Psoas muscle (tissue), 8 donors: ENCODE measurements at regions of chr6 and their contacts with region 1.

Region 1: DNA sequence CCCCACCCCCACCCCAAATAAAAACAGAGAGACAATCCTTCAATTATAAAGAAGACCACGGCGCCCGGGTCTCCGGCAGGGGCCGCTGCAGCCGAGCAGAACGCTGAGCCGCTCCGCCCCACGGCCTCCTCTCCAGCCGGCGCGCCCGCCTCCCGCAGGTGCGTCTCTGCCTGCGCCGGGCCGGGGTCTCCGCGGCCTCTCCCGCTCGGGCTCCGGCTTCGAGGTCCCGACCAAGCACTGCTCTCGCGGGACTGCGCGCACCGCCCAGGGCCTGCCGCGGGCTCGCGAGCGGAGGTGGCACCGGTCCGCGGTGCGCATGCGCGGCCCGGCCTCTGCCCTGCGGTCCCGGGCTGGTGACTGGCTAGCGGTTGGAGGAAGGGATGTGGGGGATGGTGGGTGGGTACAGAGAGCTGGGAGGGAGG is 241 bp upstream of the SIRT5 start:
- DNase-seq: peak; percentile 90 to 95
- ATAC-seq: peak; percentile 94
- H3K4me3 ChIP-seq: peak overlapping the region; percentile 97
- H3K27ac ChIP-seq: peak overlapping the region; percentile 99
- H3K4me1 ChIP-seq: peaks cover 19% of the 10 kb centered on the region
- H3K27me3 ChIP-seq: no peaks in the 10 kb centered on the region
- CTCF ChIP-seq: peak; percentile 46

Region 2: DNA sequence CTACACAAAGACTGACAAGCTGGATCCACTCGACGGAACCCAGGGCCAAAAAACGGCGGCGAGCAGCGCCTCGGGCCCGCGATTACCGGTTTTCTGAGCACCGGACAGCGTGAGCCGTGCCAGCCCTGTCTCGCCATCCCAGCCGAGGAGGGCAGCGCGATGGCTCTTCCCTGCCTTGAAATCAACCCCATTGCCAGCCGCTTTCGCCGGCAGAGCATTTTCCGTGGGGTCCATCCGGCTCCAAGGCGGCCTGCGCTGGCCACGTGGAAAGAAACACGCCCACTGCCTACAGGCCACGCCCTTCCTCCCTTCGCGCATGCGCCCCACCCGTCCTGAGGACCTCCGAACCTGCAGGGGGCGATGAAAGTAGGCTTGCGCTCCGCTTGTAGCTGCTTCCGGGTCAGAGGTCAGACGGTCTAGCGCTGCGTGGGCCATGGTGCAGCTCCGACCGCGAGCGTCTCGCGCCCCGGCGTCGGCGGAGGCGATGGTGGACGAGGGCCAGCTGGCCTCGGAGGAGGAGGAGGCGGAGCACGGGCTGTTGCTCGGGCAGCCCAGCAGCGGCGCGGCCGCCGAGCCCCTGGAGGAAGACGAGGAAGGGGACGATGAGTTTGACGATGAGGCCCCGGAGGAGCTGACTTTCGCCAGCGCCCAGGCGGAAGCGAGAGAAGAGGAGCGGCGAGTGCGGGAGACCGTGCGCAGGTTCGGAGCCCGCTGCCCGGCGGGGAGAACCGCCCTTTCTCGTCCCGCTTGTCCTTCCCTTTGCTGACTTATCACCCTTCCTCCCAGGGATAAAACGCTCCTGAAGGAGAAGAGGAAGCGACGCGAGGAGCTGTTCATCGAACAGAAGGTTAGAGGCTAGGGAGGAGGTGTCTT is 41.0 kb after region 1 on chr6 and contains the start of gene NOL7:
- intact Hi-C with region 1: loop called in 1 of 2 experiments (anchors 2 kb)
- DNase-seq: peak; percentile 97 to 99
- ATAC-seq: peak; percentile 95 to 98 (median 96)
- H3K4me3 ChIP-seq: peak within 1 kb of the TSS; percentile 75
- H3K27ac ChIP-seq: peak within 1 kb of the TSS; percentile 95
- H3K4me1 ChIP-seq: peaks cover 19% of the 10 kb centered on the region
- H3K27me3 ChIP-seq: no peaks in the 10 kb centered on the region
- CTCF ChIP-seq: peak; percentile 86
- total RNA-seq, gene NOL7: 31.2 to 45.1 (median 41.8) TPM